Heart left ventricle (tissue), 16 donors: ENCODE measurements at regions of chr1 and their contacts with region 1.

Region 1: GRCh38 chr1:237386362-237387143 is 344.6 kb downstream of the RYR2 start:
- DNase-seq: no peak
- ATAC-seq: no peak
- H3K4me3 ChIP-seq: no peak overlapping the region
- H3K27ac ChIP-seq: no peak overlapping the region
- H3K4me1 ChIP-seq: peaks cover 0 to 50% (median 16%) of the 10 kb centered on the region in 12 donors
- H3K27me3 ChIP-seq: no peaks in the 10 kb centered on the region
- CTCF ChIP-seq: peak; percentile 38 to 71 (median 53)
- POLR2A ChIP-seq: no peak

Region 2: DNA sequence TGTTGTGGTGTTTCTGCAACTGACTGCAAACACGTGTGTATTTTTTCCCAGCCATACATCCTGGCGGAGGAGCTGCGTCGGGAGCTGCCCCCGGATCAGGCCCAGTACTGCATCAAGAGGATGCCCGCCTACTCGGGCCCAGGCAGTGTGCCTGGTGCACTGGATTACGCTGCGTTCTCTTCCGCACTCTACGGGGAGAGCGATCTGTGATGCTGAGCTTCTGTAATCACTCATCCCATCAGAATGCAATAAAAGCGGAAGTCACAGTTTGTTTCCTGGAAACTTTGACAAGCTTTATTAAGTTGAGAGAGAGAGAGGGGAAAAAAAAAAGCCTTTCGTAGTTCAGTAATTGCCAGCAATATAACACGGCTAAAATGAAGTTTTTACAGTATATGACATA is 624.1 kb before region 1 on chr1:
- intact Hi-C with region 1: loop called in 1 of 10 experiments (anchors 5 kb)
- DNase-seq: no peak
- ATAC-seq: peak in 1 of 4 donors; percentile 44
- H3K4me3 ChIP-seq: no peak overlapping the region
- H3K27ac ChIP-seq: no peak overlapping the region
- H3K4me1 ChIP-seq: peaks cover 0 to 25% (median 0%) of the 10 kb centered on the region in 12 donors
- H3K27me3 ChIP-seq: no peaks in the 10 kb centered on the region
- CTCF ChIP-seq: no peak
- POLR2A ChIP-seq: no peak

Region 3: DNA sequence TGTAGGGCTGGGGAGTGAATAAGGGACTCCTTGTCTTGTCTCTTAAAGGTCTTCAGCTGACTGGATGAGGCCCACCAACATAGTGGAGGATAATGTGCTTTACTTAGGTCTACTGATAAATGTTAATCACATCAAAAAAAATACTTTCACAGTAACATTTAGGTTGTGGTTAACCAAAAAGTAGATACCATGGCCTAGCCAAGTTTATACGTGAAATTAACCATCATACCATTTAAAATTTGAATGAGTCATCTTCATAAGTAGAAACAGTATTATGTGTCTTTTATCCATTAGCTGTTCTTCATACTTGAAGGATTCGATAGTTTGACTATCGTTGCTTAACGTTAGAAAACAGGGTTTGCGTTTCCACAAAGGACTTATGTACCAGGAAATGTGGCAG is 510.6 kb before region 1 on chr1:
- intact Hi-C with region 1: no loop called
- DNase-seq: no peak
- ATAC-seq: no peak
- H3K4me3 ChIP-seq: no peak overlapping the region
- H3K27ac ChIP-seq: no peak overlapping the region
- H3K4me1 ChIP-seq: peaks cover 0 to 25% (median 11%) of the 10 kb centered on the region in 12 donors
- H3K27me3 ChIP-seq: no peaks in the 10 kb centered on the region
- CTCF ChIP-seq: no peak
- POLR2A ChIP-seq: no peak

Region 4: DNA sequence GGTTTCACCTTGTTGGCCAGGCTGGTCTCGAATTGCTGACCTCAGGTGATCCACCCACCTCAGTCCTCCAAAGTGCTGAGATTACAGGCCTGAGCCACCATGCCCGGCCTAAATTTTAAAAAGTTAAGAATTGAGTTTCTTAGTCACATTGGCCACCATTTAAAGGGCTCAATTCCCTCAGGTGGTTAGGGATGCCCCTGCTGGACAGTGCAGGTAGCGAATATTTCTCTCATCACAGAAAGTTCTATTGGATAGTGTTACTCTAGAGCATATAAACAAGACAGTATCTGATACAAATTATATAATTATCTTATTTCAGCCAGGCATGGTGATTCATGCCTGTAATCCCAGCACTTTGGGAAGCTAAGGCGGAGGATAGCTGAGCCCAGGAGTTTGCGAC is 184.0 kb after region 1 on chr1:
- intact Hi-C with region 1: no loop called
- DNase-seq: no peak
- ATAC-seq: no peak
- H3K4me3 ChIP-seq: no peak overlapping the region
- H3K27ac ChIP-seq: no peak overlapping the region
- H3K4me1 ChIP-seq: peaks cover 0 to 7% (median 0%) of the 10 kb centered on the region in 12 donors
- H3K27me3 ChIP-seq: no peaks in the 10 kb centered on the region
- CTCF ChIP-seq: peak in 4 of 12 donors; percentile 9 to 24 (median 12)
- POLR2A ChIP-seq: no peak